ENCODE measurements at regions of chr1 and their contacts with region 1.

Region 1: DNA sequence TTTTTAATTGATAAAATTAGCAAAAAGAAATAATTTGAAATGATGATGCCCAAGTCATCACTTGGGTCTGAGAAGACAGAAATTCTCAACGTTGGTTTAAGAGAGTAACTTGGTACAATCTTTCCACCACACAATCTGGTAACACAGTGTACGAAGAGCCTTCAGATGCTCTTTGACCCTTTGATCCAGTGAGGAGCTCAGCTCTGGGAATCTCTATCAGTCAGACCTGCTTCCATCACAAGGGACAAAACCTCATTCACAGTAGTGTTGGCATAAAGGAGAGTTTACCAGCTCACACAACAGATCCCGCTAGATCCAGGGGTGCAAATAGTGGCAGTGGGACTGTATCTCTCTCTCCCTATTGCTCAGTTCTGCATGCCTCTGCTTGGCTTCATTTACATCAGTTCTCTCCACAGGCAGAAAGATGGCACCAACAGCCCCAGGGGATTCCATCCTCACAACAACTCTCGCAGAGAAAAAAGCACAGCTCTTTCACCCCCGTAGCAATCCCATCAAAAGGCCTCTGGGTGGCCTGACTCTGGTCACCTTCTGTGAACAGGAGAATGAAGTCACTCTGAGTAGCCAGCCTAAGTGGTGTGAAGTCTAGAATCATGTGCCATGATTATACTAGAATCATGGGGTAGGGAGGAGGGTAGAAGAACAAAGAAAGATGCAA is 119.7 kb downstream of the ZNF281 start:
- DNase-seq: peak; percentile 47
- ATAC-seq: peak; percentile 95
- H3K4me3 Mint-ChIP-seq: no peak overlapping the region
- H3K27ac Mint-ChIP-seq: no peak overlapping the region
- H3K4me1 Mint-ChIP-seq: peaks cover 14% of the 10 kb centered on the region
- H3K27me3 Mint-ChIP-seq: peaks cover 47% of the 10 kb centered on the region
- CTCF ChIP-seq: no peak

Region 2: DNA sequence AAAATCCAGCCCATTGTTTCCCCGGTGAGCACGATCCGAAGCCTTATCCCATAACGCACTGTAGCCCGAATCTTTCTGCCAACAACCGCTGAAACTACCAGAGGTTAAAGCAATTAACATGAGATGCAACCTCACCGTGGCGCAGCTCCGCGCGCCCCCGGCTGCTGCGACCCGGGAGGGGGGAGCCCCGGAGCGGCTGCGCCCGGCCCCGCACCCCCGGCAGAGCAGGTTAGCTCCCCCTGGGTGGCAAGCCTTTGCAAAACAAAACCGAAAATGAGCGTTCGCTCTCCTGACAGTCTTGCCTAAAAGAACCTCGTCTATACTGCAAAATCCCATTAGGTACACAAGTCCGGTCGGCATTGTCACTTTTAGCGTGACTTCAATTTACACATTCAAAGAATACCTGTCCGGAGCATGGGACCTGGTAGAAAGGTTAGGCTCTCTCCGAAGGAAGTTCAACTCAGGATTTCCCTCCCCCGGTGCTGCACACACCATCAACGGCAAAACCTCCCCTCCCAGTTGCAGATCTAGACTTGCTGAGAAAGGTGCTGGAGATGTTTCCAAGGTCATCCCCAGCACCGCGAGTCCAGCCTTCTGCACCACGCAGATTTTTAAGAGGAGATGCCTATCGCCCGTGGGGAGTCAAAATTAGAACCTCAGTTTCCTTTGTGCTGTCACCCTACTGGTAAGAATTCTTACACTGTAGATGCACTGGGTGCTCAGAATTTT is 12.2 kb after region 1 on chr1:
- CTCF ChIA-PET with region 1: interaction called, 11 read pairs
- POLR2A ChIA-PET with region 1: no interaction called
- DNase-seq: peak; percentile 29
- ATAC-seq: peak; percentile 53
- H3K4me3 Mint-ChIP-seq: peak overlapping the region; percentile 71
- H3K27ac Mint-ChIP-seq: no peak overlapping the region
- H3K4me1 Mint-ChIP-seq: peaks cover 21% of the 10 kb centered on the region
- H3K27me3 Mint-ChIP-seq: peaks cover 31% of the 10 kb centered on the region
- CTCF ChIP-seq: no peak

Region 3: GRCh38 chr1:200488375-200489165 is 198.4 kb after region 1 on chr1:
- CTCF ChIA-PET with region 1: interaction called, 15 read pairs
- POLR2A ChIA-PET with region 1: no interaction called
- DNase-seq: peak; percentile 54
- ATAC-seq: peak; percentile 83
- H3K4me3 Mint-ChIP-seq: peak overlapping the region; percentile 29
- H3K27ac Mint-ChIP-seq: no peak overlapping the region
- H3K4me1 Mint-ChIP-seq: peaks cover 11% of the 10 kb centered on the region
- H3K27me3 Mint-ChIP-seq: peaks cover 9% of the 10 kb centered on the region
- CTCF ChIP-seq: peak; percentile 75

Measured in WTC11 (cell line).